CD8-positive, alpha-beta T cell (primary cell): ENCODE measurements at regions of chr15 and their contacts with region 1.

Region 1: GRCh38 chr15:67101911-67102598 is 36.7 kb downstream of the SMAD3 start:
- DNase-seq: peak in 8 of 9 experiments; percentile 34 to 92 (median 56)
- ATAC-seq: peak; percentile 61
- H3K4me3 ChIP-seq: peak overlapping the region in 1 of 2 experiments; percentile 9
- H3K4me3 Mint-ChIP-seq: no peak overlapping the region
- H3K27ac ChIP-seq: peak overlapping the region in 1 of 2 experiments; percentile 71
- H3K27ac Mint-ChIP-seq: no peak overlapping the region
- H3K4me1 ChIP-seq: peaks cover 86% of the 10 kb centered on the region
- H3K4me1 Mint-ChIP-seq: peaks cover 29% of the 10 kb centered on the region
- H3K27me3 ChIP-seq: no peaks in the 10 kb centered on the region
- H3K27me3 Mint-ChIP-seq: no peaks in the 10 kb centered on the region
- CTCF ChIP-seq: no peak

Region 2: DNA sequence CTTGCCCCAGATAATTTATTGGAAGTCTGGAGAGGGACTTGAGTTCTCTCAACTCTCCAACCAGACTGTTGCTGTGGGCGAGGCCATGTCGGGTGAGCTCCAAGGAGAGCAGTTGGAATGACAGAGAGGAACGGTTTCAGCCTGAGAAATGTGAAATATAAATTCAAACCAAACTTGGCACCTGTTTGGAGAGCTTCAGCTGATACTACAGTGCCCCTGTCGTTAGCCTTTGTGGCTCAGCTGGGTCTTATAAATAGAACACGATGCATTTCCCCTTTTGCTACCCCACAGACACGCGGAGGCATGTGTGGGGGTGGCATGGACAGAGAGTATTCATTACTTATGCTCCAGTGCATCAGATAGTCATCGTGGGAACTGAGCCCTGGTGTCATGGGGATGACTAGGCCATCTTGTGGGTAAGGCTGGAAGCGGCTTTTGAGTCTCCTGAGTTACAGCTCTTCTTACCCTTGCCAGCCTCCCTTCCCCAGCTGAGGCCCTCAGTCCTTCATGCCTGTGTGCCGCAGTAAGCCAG is 21.1 kb before region 1 on chr15:
- CTCF ChIA-PET with region 1: interaction called, 4 read pairs
- POLR2A ChIA-PET with region 1: interaction called, 29 read pairs
- intact Hi-C with region 1: loop called in 1 of 2 experiments (anchors 2 kb)
- DNase-seq: peak in 5 of 9 experiments; percentile 33 to 74 (median 55)
- ATAC-seq: peak; percentile 41
- H3K4me3 ChIP-seq: no peak overlapping the region
- H3K4me3 Mint-ChIP-seq: peak overlapping the region; percentile 33
- H3K27ac ChIP-seq: peak overlapping the region in 1 of 2 experiments; percentile 31
- H3K27ac Mint-ChIP-seq: peak overlapping the region; percentile 72
- H3K4me1 ChIP-seq: peaks cover 55% of the 10 kb centered on the region
- H3K4me1 Mint-ChIP-seq: peaks cover 85% of the 10 kb centered on the region
- H3K27me3 ChIP-seq: no peaks in the 10 kb centered on the region
- H3K27me3 Mint-ChIP-seq: no peaks in the 10 kb centered on the region
- CTCF ChIP-seq: no peak

Region 3: DNA sequence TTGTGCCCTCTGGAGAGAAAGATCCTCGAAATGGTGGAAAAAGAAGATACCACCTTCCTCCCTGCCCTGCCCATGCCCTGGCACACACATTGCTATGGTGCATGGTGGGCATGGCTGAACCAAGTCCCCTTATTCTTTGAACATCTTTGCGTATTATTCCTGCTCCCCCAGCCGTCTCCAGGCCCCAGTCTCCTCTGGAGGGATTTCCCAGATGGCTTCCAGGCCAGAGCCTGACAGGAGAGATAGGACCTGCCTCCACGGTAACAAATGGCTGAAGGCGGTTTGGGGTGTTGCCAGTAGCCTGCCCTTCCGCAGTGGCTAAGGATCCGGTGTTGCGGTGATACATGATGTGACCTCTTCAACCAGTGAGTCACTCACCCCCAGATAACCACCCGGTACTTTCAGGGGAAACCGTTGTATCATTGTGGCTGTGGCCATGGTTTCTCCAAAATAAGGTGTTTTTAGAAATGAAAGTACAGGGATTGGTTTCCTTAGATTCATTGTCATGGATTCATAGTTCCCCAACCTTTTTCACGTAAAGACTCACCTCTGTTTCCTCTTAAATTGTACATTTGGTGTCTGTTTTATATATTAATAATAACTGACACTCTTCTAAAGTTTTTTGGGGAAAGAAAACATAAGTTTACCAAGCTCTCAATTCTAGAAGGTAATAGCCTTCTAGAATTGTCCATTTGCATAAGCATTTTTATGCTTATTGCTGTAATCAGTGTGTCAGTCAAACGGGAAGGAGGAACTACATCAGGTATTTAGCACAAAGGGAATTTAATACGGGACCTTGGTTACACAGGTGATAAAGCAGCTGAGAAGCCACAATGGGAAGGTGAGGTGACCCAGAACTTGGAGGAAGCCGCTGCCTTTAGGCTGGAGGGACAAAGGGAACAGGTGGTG is 10.7 kb before region 1 on chr15:
- CTCF ChIA-PET with region 1: interaction called, 3 read pairs
- POLR2A ChIA-PET with region 1: interaction called, 5 read pairs
- intact Hi-C with region 1: loop called in 1 of 2 experiments (anchors 1 kb)
- DNase-seq: peak in 8 of 9 experiments; percentile 55 to 90 (median 70)
- ATAC-seq: peak; percentile 80
- H3K4me3 ChIP-seq: peak overlapping the region in 1 of 2 experiments; percentile 6
- H3K4me3 Mint-ChIP-seq: peak overlapping the region; percentile 37
- H3K27ac ChIP-seq: peak overlapping the region in 1 of 2 experiments; percentile 66
- H3K27ac Mint-ChIP-seq: peak overlapping the region; percentile 71
- H3K4me1 ChIP-seq: peaks cover 29% of the 10 kb centered on the region
- H3K4me1 Mint-ChIP-seq: peaks cover 79% of the 10 kb centered on the region
- H3K27me3 ChIP-seq: no peaks in the 10 kb centered on the region
- H3K27me3 Mint-ChIP-seq: no peaks in the 10 kb centered on the region
- CTCF ChIP-seq: no peak

Region 4: DNA sequence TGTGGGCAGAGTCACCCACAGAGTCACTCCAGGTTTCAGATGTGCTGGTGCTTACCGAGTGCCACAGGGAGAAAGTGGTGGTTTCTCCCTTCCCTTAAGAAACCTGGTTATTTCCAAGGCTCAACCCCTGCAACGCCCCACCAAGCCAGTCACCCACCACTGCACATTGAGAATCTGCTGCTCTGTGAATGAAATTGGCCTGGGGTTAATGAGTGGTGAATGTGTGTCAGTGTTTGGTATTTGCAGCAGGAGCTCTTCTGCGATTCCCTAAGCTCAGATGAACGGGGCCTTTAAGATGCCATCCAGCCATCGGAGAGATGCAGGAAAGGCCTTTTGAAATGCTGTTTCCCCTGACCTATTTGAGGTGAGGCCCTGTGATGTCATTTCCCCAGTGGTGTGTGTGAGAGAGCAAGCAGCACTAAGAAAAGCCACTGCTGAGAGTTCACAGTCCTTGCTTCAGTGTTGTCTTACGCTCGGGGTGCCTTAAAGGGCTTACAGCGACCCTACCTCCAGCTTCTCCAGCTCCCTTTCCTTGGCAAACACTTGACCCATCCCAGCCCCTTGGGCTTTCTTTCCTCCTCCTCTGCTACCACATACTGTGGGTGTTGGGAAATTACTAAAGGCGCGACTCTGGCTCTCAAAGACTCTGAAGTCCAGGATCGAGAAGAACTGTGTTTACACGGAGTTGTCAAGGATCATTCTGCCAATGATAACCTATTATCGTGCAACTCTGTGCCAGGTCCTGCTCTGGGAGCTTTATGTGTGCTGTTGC is 32.2 kb after region 1 on chr15:
- CTCF ChIA-PET with region 1: interaction called, 6 read pairs
- POLR2A ChIA-PET with region 1: interaction called, 3 read pairs
- intact Hi-C with region 1: loop called in 1 of 2 experiments (anchors 1 kb)
- DNase-seq: peak; percentile 37 to 93 (median 69)
- ATAC-seq: peak; percentile 95
- H3K4me3 ChIP-seq: peak overlapping the region; percentile 45 to 52
- H3K4me3 Mint-ChIP-seq: peak overlapping the region; percentile 84
- H3K27ac ChIP-seq: peak overlapping the region; percentile 80 to 96
- H3K27ac Mint-ChIP-seq: peak overlapping the region; percentile 99
- H3K4me1 ChIP-seq: peaks cover 43% of the 10 kb centered on the region
- H3K4me1 Mint-ChIP-seq: peaks cover 87% of the 10 kb centered on the region
- H3K27me3 ChIP-seq: no peaks in the 10 kb centered on the region
- H3K27me3 Mint-ChIP-seq: no peaks in the 10 kb centered on the region
- CTCF ChIP-seq: no peak

Region 5: DNA sequence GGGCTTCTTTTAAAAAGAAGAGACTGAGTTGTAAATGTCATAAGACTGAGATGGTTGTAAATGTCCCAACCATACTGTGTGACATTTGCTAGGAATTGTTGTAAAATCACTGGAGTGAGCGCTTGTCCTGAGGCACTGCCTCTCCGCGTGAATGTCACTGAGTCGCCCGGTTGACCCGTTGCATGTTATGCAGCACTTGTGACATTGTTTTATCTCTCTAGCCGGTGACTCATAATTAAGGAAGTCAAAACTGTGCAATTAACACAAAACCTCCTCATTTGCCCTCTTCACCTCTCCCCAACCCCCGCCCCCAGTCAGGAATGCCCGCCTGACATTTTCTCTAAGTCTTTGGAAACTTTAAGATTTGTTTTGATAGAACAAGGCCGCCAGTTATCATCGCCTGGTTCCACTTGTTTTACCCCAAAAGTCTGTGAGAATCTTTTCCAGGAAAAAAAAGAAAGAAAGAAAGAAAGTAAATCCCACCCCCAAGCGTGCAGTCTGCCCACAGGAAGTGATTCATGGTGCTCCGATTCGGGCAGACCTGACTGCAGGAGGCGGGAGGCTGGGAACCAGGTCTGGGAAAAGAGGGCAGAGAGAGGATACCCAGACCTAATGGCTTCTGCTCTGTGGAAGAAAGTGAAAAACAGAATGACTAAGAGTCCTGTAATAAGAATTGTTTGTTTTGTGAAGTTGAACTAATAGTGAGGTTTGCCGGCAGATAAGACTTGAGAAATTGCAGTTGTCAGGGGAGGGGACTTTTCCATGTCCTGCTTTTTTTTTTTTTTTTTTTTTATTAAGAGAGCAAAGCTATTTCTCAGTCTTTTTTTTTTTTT is 48.2 kb after region 1 on chr15:
- CTCF ChIA-PET with region 1: no interaction called
- POLR2A ChIA-PET with region 1: no interaction called
- intact Hi-C with region 1: loop called in 1 of 2 experiments (anchors 5 kb)
- DNase-seq: peak in 4 of 9 experiments; percentile 23 to 55 (median 38)
- ATAC-seq: peak; percentile 45
- H3K4me3 ChIP-seq: no peak overlapping the region
- H3K4me3 Mint-ChIP-seq: peak overlapping the region; percentile 1
- H3K27ac ChIP-seq: no peak overlapping the region
- H3K27ac Mint-ChIP-seq: peak overlapping the region; percentile 1
- H3K4me1 ChIP-seq: peaks cover 46% of the 10 kb centered on the region
- H3K4me1 Mint-ChIP-seq: peaks cover 65% of the 10 kb centered on the region
- H3K27me3 ChIP-seq: no peaks in the 10 kb centered on the region
- H3K27me3 Mint-ChIP-seq: no peaks in the 10 kb centered on the region
- CTCF ChIP-seq: no peak